ENCODE measurements at regions of chr4 and their contacts with region 1.

Region 1: GRCh38 chr4:3442959-3443749 is 1.4 kb downstream of the HGFAC start:
- DNase-seq: peak; percentile 52 to 77
- H3K4me3 ChIP-seq: no peak overlapping the region
- H3K27ac ChIP-seq: no peak overlapping the region
- H3K4me1 ChIP-seq: peaks cover 0 to 9% (median 8%) of the 10 kb centered on the region in 4 donors
- H3K27me3 ChIP-seq: no peaks in the 10 kb centered on the region
- CTCF ChIP-seq: peak in 6 of 7 experiments; percentile 84 to 99 (median 96)
- EP300 ChIP-seq: no peak
- POLR2A ChIP-seq: no peak

Region 2: GRCh38 chr4:3346146-3346545 is 97.0 kb before region 1 on chr4:
- intact Hi-C with region 1: loop called (anchors 5 kb)
- DNase-seq: peak; percentile 50 to 87
- H3K4me3 ChIP-seq: no peak overlapping the region
- H3K27ac ChIP-seq: no peak overlapping the region
- H3K4me1 ChIP-seq: peaks cover 4 to 21% (median 12%) of the 10 kb centered on the region in 4 donors
- H3K27me3 ChIP-seq: no peaks in the 10 kb centered on the region
- CTCF ChIP-seq: peak in 5 of 7 experiments; percentile 70 to 85 (median 83)
- EP300 ChIP-seq: no peak
- POLR2A ChIP-seq: no peak

Region 3: GRCh38 chr4:3489451-3489962 is 46.4 kb after region 1 on chr4:
- intact Hi-C with region 1: no loop called
- DNase-seq: no peak
- H3K4me3 ChIP-seq: no peak overlapping the region
- H3K27ac ChIP-seq: no peak overlapping the region
- H3K4me1 ChIP-seq: peaks cover 13 to 14% (median 14%) of the 10 kb centered on the region in 4 donors
- H3K27me3 ChIP-seq: peaks cover 0 to 76% (median 20%) of the 10 kb centered on the region in 3 donors
- CTCF ChIP-seq: no peak
- EP300 ChIP-seq: no peak
- POLR2A ChIP-seq: no peak

Measured in stomach (tissue), 19 donors.